ENCODE measurements at regions of chr3 and their contacts with region 1.

Region 1: GRCh38 chr3:169662132-169662842 is 1.2 kb downstream of the MECOM start:
- DNase-seq: peak; percentile 65 to 79
- ATAC-seq: peak; percentile 78 to 92 (median 82)
- H3K4me3 ChIP-seq: peak overlapping the region; percentile 65 to 95 (median 78)
- H3K27ac ChIP-seq: peak overlapping the region; percentile 86 to 98 (median 93)
- H3K4me1 ChIP-seq: peaks cover 0 to 64% (median 23%) of the 10 kb centered on the region in 9 donors
- H3K27me3 ChIP-seq: peaks cover 0 to 100% (median 62%) of the 10 kb centered on the region in 7 donors
- CTCF ChIP-seq: peak; percentile 19 to 70 (median 56)

Region 2: DNA sequence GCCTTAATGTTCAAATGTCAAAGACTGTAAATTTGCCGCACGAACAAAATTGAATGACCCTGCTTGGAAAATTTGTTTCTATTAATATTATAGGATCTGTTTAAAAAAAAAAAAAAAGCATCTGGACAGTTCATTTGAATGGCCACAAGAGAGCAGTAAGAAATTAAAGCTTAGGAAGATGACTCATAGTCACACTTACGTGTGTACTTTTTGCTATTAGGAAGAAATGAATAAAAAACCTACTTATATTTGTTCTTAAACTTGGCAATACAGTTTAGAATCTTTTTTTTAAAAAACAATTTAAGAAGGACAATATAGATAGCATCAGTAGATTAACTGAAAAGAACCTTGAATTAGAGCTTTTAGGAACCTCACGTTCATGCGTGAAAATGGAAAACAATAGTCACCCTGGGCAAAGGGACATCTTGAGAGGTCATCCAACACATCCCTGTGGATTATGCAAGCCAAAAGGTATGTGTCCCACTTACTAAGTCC is 620.6 kb before region 1 on chr3:
- intact Hi-C with region 1: loop called in 7 of 10 experiments (anchors 5 to 10 kb)
- DNase-seq: no peak
- ATAC-seq: peak in 6 of 8 donors; percentile 20 to 79 (median 68)
- H3K4me3 ChIP-seq: peak overlapping the region in 3 of 10 donors; percentile 11 to 24 (median 13)
- H3K27ac ChIP-seq: peak overlapping the region in 6 of 10 donors; percentile 10 to 38 (median 27)
- H3K4me1 ChIP-seq: peaks cover 0 to 7% (median 0%) of the 10 kb centered on the region in 9 donors
- H3K27me3 ChIP-seq: no peaks in the 10 kb centered on the region
- CTCF ChIP-seq: peak; percentile 27 to 75 (median 59)

Region 3: GRCh38 chr3:169149349-169149890 is 512.9 kb before region 1 on chr3:
- intact Hi-C with region 1: loop called in 9 of 10 experiments (anchors 2 to 5 kb)
- DNase-seq: peak; percentile 84 to 85
- ATAC-seq: peak; percentile 80 to 91 (median 82)
- H3K4me3 ChIP-seq: peak overlapping the region in 9 of 10 donors; percentile 13 to 69 (median 61)
- H3K27ac ChIP-seq: peak overlapping the region; percentile 26 to 96 (median 78)
- H3K4me1 ChIP-seq: peaks cover 0 to 38% (median 16%) of the 10 kb centered on the region in 9 donors
- H3K27me3 ChIP-seq: peaks cover 0 to 78% (median 32%) of the 10 kb centered on the region in 7 donors
- CTCF ChIP-seq: peak; percentile 67 to 93 (median 86)

Region 4: DNA sequence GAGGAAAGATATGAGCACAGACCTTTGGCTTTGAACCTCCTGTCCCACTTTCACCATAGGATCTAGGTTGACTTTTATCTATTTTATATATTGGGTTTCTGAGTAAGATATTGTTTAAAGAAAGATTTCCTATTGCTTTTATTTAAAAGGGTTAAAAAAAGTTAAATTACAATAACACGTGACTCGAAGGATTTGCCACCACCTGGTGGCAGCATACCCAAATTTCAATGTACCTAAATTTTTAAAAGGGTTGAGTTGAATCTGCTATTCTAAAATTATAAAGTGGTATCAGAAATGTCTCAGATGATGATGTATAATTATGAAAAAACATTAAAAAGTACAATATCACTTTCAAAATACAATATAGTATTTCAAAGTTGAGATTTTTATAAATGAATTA is 367.2 kb before region 1 on chr3:
- intact Hi-C with region 1: loop called in 5 of 10 experiments (anchors 5 to 10 kb)
- DNase-seq: no peak
- ATAC-seq: no peak
- H3K4me3 ChIP-seq: no peak overlapping the region
- H3K27ac ChIP-seq: no peak overlapping the region
- H3K4me1 ChIP-seq: peaks cover 0 to 18% (median 0%) of the 10 kb centered on the region in 9 donors
- H3K27me3 ChIP-seq: no peaks in the 10 kb centered on the region
- CTCF ChIP-seq: peak in 8 of 9 donors; percentile 17 to 52 (median 36)

Region 5: GRCh38 chr3:169454823-169455222 is 207.5 kb before region 1 on chr3:
- intact Hi-C with region 1: loop called in 3 of 10 experiments (anchors 5 to 10 kb)
- DNase-seq: no peak
- ATAC-seq: peak in 7 of 8 donors; percentile 35 to 89 (median 64)
- H3K4me3 ChIP-seq: no peak overlapping the region
- H3K27ac ChIP-seq: peak overlapping the region in 8 of 10 donors; percentile 9 to 71 (median 56)
- H3K4me1 ChIP-seq: peaks cover 2 to 40% (median 14%) of the 10 kb centered on the region in 9 donors
- H3K27me3 ChIP-seq: no peaks in the 10 kb centered on the region
- CTCF ChIP-seq: no peak

Region 6: GRCh38 chr3:169575373-169575772 is 86.9 kb before region 1 on chr3:
- intact Hi-C with region 1: loop called in 1 of 10 experiments (anchors 5 kb)
- DNase-seq: peak in 1 of 2 donors; percentile 24
- ATAC-seq: peak in 7 of 8 donors; percentile 19 to 73 (median 41)
- H3K4me3 ChIP-seq: no peak overlapping the region
- H3K27ac ChIP-seq: peak overlapping the region in 3 of 10 donors; percentile 16 to 36 (median 29)
- H3K4me1 ChIP-seq: peaks cover 0 to 19% (median 10%) of the 10 kb centered on the region in 9 donors
- H3K27me3 ChIP-seq: no peaks in the 10 kb centered on the region
- CTCF ChIP-seq: no peak

Region 7: DNA sequence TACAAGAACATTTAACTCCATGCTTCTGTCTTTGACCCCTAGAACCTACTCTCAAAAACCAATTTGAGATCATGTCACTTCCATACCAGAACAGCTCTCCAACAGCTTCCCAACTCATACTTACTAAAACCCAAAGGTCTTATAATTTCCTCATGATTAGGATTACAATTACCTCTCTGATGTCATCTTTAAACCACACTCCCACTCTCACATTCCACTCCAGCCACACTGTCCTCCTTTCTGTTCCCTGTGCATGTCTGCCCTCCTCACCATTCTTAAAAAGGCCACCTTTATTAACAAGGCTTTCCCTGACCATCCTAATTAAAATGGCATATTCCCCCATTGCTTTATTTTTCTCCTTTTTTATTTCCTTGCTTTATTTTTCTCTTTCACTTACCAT is 500.3 kb after region 1 on chr3:
- intact Hi-C with region 1: no loop called
- DNase-seq: no peak
- ATAC-seq: no peak
- H3K4me3 ChIP-seq: no peak overlapping the region
- H3K27ac ChIP-seq: no peak overlapping the region
- H3K4me1 ChIP-seq: peaks cover 0 to 19% (median 11%) of the 10 kb centered on the region in 9 donors
- H3K27me3 ChIP-seq: no peaks in the 10 kb centered on the region
- CTCF ChIP-seq: no peak

Measured in heart right ventricle (tissue), 16 donors.